Sigmoid colon (tissue), 7 donors: ENCODE measurements at regions of chr17 and their contacts with region 1.

Region 1: GRCh38 chr17:39730095-39730921 is at the start of gene MIEN1:
- DNase-seq: peak; percentile 95
- H3K4me3 ChIP-seq: peak within 1 kb of the TSS; percentile 62 to 86 (median 72)
- H3K27ac ChIP-seq: peak within 1 kb of the TSS; percentile 86 to 91 (median 87)
- H3K4me1 ChIP-seq: peaks cover 0 to 12% (median 10%) of the 10 kb centered on the region in 4 donors
- H3K27me3 ChIP-seq: no peaks in the 10 kb centered on the region
- CTCF ChIP-seq: peak; percentile 82 to 91 (median 82)
- EP300 ChIP-seq: no peak
- POLR2A ChIP-seq: peak; percentile 62 to 82
- total RNA-seq, gene MIEN1: 52.4 to 65.5 (median 54.8) TPM

Region 2: GRCh38 chr17:39636927-39637736 is 93.2 kb before region 1 on chr17 and contains the start of gene STARD3:
- intact Hi-C with region 1: loop called (anchors 2 kb)
- DNase-seq: peak; percentile 96
- H3K4me3 ChIP-seq: peak within 1 kb of the TSS; percentile 73 to 88 (median 82)
- H3K27ac ChIP-seq: peak within 1 kb of the TSS; percentile 84 to 89 (median 86)
- H3K4me1 ChIP-seq: peaks cover 0 to 70% (median 48%) of the 10 kb centered on the region in 4 donors
- H3K27me3 ChIP-seq: no peaks in the 10 kb centered on the region
- CTCF ChIP-seq: no peak
- EP300 ChIP-seq: no peak
- POLR2A ChIP-seq: peak; percentile 38 to 66
- total RNA-seq, gene STARD3: 35.3 to 44.1 (median 37.6) TPM

Region 3: GRCh38 chr17:39687811-39688518 is 42.3 kb before region 1 on chr17 and contains the start of gene PGAP3:
- intact Hi-C with region 1: loop called (anchors 5 kb)
- DNase-seq: peak; percentile 92
- H3K4me3 ChIP-seq: peak within 1 kb of the TSS; percentile 62 to 71 (median 66)
- H3K27ac ChIP-seq: peak within 1 kb of the TSS; percentile 84 to 92 (median 88)
- H3K4me1 ChIP-seq: peaks cover 0 to 15% (median 15%) of the 10 kb centered on the region in 4 donors
- H3K27me3 ChIP-seq: no peaks in the 10 kb centered on the region
- CTCF ChIP-seq: no peak
- EP300 ChIP-seq: no peak
- POLR2A ChIP-seq: peak in 1 of 2 donors; percentile 50
- total RNA-seq, gene PGAP3: 6.9 to 12.1 (median 8.2) TPM

Region 4: DNA sequence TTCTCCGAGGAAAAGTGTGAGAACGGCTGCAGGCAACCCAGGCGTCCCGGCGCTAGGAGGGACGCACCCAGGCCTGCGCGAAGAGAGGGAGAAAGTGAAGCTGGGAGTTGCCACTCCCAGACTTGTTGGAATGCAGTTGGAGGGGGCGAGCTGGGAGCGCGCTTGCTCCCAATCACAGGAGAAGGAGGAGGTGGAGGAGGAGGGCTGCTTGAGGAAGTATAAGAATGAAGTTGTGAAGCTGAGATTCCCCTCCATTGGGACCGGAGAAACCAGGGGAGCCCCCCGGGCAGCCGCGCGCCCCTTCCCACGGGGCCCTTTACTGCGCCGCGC is 30.5 kb before region 1 on chr17 and contains the start of gene ERBB2:
- intact Hi-C with region 1: loop called (anchors 2 kb)
- DNase-seq: peak; percentile 91
- H3K4me3 ChIP-seq: peak within 1 kb of the TSS; percentile 59 to 93 (median 84)
- H3K27ac ChIP-seq: peak within 1 kb of the TSS; percentile 82 to 86 (median 84)
- H3K4me1 ChIP-seq: peaks cover 0 to 31% (median 26%) of the 10 kb centered on the region in 4 donors
- H3K27me3 ChIP-seq: no peaks in the 10 kb centered on the region
- CTCF ChIP-seq: no peak
- EP300 ChIP-seq: no peak
- POLR2A ChIP-seq: peak; percentile 45 to 64
- total RNA-seq, gene ERBB2: 16.9 to 26.3 (median 22.5) TPM